Natural killer cell (primary cell): ENCODE measurements at regions of chr10 and their contacts with region 1.

Region 1: GRCh38 chr10:12195603-12196506 is at the starts of genes CDC123 and NUDT5:
- DNase-seq: peak; percentile 76 to 92
- ATAC-seq: peak; percentile 93 to 96 (median 94)
- H3K4me3 ChIP-seq: peak within 1 kb of the TSS; percentile 92
- H3K4me3 Mint-ChIP-seq: peak within 1 kb of the TSS; percentile 98
- H3K27ac ChIP-seq: peak within 1 kb of the TSS; percentile 93
- H3K27ac Mint-ChIP-seq: peak within 1 kb of the TSS; percentile 97 to 99
- H3K4me1 ChIP-seq: peaks cover 20% of the 10 kb centered on the region
- H3K4me1 Mint-ChIP-seq: peaks cover 48 to 55% of the 10 kb centered on the region in 2 donors
- H3K27me3 ChIP-seq: no peaks in the 10 kb centered on the region
- H3K27me3 Mint-ChIP-seq: no peaks in the 10 kb centered on the region
- CTCF ChIP-seq: no peak
- total RNA-seq, gene CDC123: 45.8 to 53.3 (median 47.6) TPM
- total RNA-seq, gene NUDT5: 25.7 to 39.1 (median 29.4) TPM

Region 2: DNA sequence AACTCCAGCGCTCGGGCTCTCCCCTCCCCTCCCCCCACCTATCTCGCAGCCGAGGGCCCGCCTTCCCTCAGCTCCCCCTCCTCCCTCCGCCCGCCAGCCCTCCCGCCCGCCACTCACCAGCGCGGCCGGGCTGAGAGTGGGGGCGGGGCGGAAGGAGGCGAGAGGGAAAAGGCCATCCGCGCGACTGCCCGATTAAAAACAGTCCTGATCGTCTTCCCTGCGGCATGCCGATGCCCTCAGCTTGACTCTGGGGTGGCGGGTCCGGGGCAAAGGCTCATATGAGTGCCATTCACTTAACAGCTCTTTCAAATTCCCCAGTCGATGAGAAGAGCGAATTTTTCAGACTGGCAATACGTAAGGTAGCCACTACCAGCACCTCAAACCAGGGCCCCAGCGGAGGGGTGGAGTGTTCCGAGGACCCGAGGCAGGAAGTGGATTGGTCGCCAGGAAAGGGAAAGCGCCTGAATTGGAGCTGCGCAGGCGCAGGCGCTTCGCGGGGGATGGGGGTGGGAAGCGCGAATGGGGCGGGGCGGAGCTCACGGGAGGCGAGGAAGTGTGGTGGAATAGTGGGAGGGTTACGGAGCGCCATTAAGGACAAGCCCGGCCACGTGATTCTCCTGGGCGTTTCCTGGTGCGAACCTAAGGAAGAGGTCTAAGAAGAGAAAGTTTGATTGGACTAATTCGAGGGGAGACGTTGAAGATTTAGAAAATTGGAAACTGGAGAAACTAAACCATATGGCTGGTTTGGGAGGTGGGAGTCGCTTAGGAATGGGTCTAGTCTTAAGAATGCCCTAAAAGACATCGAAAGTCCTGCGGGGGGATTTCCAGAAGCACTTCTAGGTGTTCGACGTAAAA is 152.8 kb before region 1 on chr10 and contains the start of gene UPF2:
- intact Hi-C with region 1: loop called (anchors 2 kb)
- DNase-seq: peak; percentile 88 to 98
- ATAC-seq: peak; percentile 85 to 93 (median 88)
- H3K4me3 ChIP-seq: peak within 1 kb of the TSS; percentile 100
- H3K4me3 Mint-ChIP-seq: peak within 1 kb of the TSS; percentile 98
- H3K27ac ChIP-seq: peak within 1 kb of the TSS; percentile 95
- H3K27ac Mint-ChIP-seq: peak within 1 kb of the TSS; percentile 97 to 98
- H3K4me1 ChIP-seq: peaks cover 12% of the 10 kb centered on the region
- H3K4me1 Mint-ChIP-seq: peaks cover 27 to 34% of the 10 kb centered on the region in 2 donors
- H3K27me3 ChIP-seq: no peaks in the 10 kb centered on the region
- H3K27me3 Mint-ChIP-seq: no peaks in the 10 kb centered on the region
- CTCF ChIP-seq: no peak
- total RNA-seq, gene UPF2: 29.3 to 33.2 (median 30.1) TPM

Region 3: GRCh38 chr10:12129222-12130111 is 66.4 kb before region 1 on chr10 and contains the start of gene SEC61A2:
- intact Hi-C with region 1: loop called (anchors 5 kb)
- DNase-seq: peak; percentile 98 to 99
- ATAC-seq: peak; percentile 93 to 98 (median 95)
- H3K4me3 ChIP-seq: peak within 1 kb of the TSS; percentile 81
- H3K4me3 Mint-ChIP-seq: peak within 1 kb of the TSS; percentile 92
- H3K27ac ChIP-seq: peak within 1 kb of the TSS; percentile 86
- H3K27ac Mint-ChIP-seq: peak within 1 kb of the TSS; percentile 69 to 74
- H3K4me1 ChIP-seq: peaks cover 17% of the 10 kb centered on the region
- H3K4me1 Mint-ChIP-seq: peaks cover 13 to 14% of the 10 kb centered on the region in 2 donors
- H3K27me3 ChIP-seq: no peaks in the 10 kb centered on the region
- H3K27me3 Mint-ChIP-seq: no peaks in the 10 kb centered on the region
- CTCF ChIP-seq: no peak
- total RNA-seq, gene SEC61A2: 16.6 to 22.2 (median 17.4) TPM

Region 4: DNA sequence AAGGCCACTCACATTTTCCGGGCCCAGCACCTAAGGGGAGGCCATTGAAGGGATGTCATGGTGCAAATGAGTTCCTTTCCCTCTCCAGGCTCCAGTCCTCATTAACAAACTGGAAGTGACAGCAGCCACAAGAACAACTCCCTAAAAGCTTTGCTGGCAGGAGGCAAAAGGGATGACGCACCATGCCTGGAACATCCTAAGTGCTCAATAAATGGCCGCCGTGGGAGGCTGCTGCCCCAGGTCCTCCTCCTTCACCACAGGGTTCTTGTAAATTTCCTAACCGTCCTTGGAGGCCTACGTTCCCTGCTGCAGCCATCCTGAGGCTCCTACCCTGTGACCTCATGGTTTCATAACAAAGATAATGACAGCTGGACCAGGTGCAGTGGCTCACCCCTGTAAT is 112.2 kb after region 1 on chr10:
- intact Hi-C with region 1: no loop called
- DNase-seq: no peak
- ATAC-seq: no peak
- H3K4me3 ChIP-seq: no peak overlapping the region
- H3K4me3 Mint-ChIP-seq: no peak overlapping the region
- H3K27ac ChIP-seq: no peak overlapping the region
- H3K27ac Mint-ChIP-seq: no peak overlapping the region
- H3K4me1 ChIP-seq: peaks cover 3% of the 10 kb centered on the region
- H3K4me1 Mint-ChIP-seq: peaks cover 5 to 6% of the 10 kb centered on the region in 2 donors
- H3K27me3 ChIP-seq: no peaks in the 10 kb centered on the region
- H3K27me3 Mint-ChIP-seq: peaks cover 10 to 15% of the 10 kb centered on the region in 2 donors
- CTCF ChIP-seq: no peak